ENCODE measurements at regions of chr5 and their contacts with region 1.

Region 1: DNA sequence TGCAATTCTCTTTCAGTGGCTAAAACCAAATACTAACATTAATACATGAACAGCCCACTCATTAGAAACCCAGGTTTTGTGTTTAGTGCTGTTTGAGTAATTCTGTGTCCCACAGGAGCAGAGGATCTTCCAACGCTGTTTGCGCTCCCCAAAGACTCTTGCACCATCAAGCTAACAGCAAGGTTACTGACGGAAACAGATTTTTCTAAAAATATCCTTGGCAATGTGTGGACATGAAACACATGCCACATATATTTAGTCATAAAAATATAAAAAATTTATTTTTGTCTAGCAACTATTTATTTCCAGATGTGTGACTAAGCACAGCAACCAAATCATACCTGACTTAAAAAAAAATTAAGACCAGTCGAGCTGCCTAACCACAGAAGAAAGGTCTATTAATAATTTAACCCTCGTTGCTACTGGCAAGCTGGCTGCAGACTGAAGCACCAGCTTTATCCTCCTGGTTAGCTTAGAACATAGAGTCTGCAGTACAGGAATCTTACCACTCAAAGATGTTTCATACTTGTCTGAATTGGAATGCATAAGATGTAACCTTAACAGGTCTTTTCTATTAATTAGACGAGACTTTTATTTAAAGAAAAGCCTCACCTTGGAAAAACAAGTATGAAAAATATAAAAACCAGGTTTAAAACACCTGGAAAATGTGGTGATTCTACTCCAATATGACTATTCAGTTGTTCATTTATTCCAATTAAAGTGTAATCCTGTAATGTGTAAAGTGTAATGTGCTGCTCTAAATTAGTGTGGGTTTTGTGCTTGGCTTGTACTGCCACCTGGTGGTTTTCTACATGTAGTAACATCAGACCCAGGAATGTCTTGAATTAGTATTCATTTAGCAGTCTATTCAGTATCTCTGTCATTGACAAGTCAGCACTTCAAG is 272.5 kb downstream of the EPB41L4A start:
- DNase-seq: peak; percentile 43 to 78 (median 58)
- ATAC-seq: peak; percentile 98
- H3K4me3 ChIP-seq: no peak overlapping the region
- H3K27ac ChIP-seq: no peak overlapping the region
- H3K4me1 ChIP-seq: no peaks in the 10 kb centered on the region; a peak in 1 of 5 replicates
- H3K27me3 ChIP-seq: no peaks in the 10 kb centered on the region
- CTCF ChIP-seq: peak; percentile 61 to 85 (median 72); a peak in 5 of 6 replicates
- EP300 ChIP-seq: no peak
- POLR2A ChIP-seq: no peak
- RAD21 ChIP-seq: peak; percentile 91 to 94

Region 2: DNA sequence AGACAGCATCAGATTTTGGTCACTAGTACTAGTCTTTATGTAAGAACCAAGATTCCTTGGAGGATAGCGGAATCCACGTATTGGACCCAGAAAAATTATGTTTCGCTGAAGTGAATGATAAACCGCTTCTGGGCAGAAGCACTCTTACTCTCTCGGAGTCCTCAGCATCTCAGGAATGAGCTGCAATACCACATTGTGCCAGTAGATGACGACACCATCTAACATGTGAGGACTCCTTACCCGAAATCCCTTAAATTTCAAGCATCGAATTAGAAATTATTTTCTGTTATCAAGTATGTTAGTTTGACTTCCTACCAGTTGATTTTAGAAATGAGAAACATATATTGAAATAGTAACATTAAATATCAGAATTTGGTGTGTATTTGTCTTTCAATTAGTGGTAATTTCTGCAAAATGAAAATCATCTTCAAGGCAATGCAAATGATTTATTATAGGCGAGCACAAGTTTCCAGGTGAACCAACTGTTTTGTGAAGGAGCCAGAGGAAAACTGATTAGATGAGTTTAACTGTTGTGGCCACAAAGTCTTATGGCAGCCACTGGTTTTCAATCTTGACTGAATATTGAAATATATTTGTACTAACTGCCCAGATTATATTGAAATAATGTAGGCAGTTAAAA is 988.4 kb before region 1 on chr5:
- CTCF ChIA-PET with region 1: interaction called, 23 read pairs
- POLR2A ChIA-PET with region 1: no interaction called
- in situ Hi-C with region 1: loop called (anchors 10 kb)
- intact Hi-C with region 1: loop called (anchors 2 kb)
- DNase-seq: peak; percentile 42 to 77 (median 71)
- ATAC-seq: peak; percentile 88
- H3K4me3 ChIP-seq: no peak overlapping the region
- H3K27ac ChIP-seq: no peak overlapping the region
- H3K4me1 ChIP-seq: no peaks in the 10 kb centered on the region
- H3K27me3 ChIP-seq: no peaks in the 10 kb centered on the region; a peak in 1 of 5 replicates
- CTCF ChIP-seq: peak; percentile 80 to 96 (median 92)
- EP300 ChIP-seq: no peak
- POLR2A ChIP-seq: no peak
- RAD21 ChIP-seq: peak; percentile 89 to 90

Region 3: GRCh38 chr5:111278845-111279504 is 867.6 kb before region 1 on chr5:
- CTCF ChIA-PET with region 1: no interaction called
- POLR2A ChIA-PET with region 1: no interaction called
- in situ Hi-C with region 1: no loop called
- intact Hi-C with region 1: loop called (anchors 5 kb)
- DNase-seq: peak; percentile 70 to 74 (median 72)
- ATAC-seq: peak; percentile 99
- H3K4me3 ChIP-seq: no peak overlapping the region
- H3K27ac ChIP-seq: no peak overlapping the region
- H3K4me1 ChIP-seq: no peaks in the 10 kb centered on the region
- H3K27me3 ChIP-seq: no peaks in the 10 kb centered on the region
- CTCF ChIP-seq: peak; percentile 75 to 81 (median 76)
- EP300 ChIP-seq: no peak
- POLR2A ChIP-seq: no peak
- RAD21 ChIP-seq: peak; percentile 67 to 79

Region 4: DNA sequence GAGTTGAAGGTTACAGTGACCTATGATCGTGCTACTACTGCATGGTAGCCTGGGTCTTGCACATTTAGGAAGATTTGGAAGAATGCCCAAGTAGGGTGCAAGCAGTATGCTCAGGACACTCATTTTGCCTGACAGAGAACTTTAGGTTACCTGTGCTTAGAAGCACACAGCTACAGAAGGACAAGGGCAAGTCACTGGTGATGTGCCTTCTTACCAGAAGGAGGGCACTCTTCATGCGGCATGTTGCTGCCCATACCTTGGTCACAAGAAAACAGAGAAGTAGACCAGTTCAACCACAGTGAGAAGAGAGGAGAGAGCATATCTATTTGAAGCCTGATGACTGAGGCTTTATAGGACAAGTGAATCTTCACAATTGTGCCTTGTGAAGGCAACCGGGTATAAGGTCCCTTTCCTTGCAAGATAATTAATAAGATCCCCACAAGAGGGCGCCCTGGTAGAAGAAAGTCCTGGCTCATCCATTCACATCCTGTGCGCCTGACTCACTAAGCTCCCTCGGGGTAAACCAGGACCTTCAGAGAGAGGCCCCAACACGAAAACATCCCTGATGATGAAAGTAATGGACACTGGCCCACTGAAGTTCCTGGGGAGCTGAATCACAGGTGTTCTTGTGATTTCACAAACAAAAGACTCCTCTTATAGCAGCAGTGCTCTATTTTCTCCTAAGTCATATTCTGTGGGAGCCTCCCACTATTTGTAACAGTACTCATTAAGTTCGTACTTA is 596.1 kb before region 1 on chr5:
- CTCF ChIA-PET with region 1: interaction called, 7 read pairs
- POLR2A ChIA-PET with region 1: no interaction called
- in situ Hi-C with region 1: loop called (anchors 10 kb)
- intact Hi-C with region 1: loop called (anchors 1 kb)
- DNase-seq: peak; percentile 59 to 82 (median 67)
- ATAC-seq: peak; percentile 96
- H3K4me3 ChIP-seq: no peak overlapping the region
- H3K27ac ChIP-seq: no peak overlapping the region
- H3K4me1 ChIP-seq: peaks cover 0 to 3% of the 10 kb centered on the region in 2 experiments; a peak in 1 of 5 replicates
- H3K27me3 ChIP-seq: peaks cover 3% of the 10 kb centered on the region in 2 experiments; a peak in 3 of 5 replicates
- CTCF ChIP-seq: peak; percentile 63 to 70 (median 69)
- EP300 ChIP-seq: no peak
- POLR2A ChIP-seq: no peak
- RAD21 ChIP-seq: peak; percentile 59 to 72

Region 5: GRCh38 chr5:111680737-111681413 is 465.7 kb before region 1 on chr5:
- CTCF ChIA-PET with region 1: interaction called, 5 read pairs
- POLR2A ChIA-PET with region 1: no interaction called
- in situ Hi-C with region 1: no loop called
- intact Hi-C with region 1: loop called (anchors 10 kb)
- DNase-seq: no peak
- ATAC-seq: no peak
- H3K4me3 ChIP-seq: no peak overlapping the region
- H3K27ac ChIP-seq: no peak overlapping the region
- H3K4me1 ChIP-seq: no peaks in the 10 kb centered on the region
- H3K27me3 ChIP-seq: peaks cover 0 to 4% of the 10 kb centered on the region in 2 experiments; a peak in 2 of 5 replicates
- CTCF ChIP-seq: no peak
- EP300 ChIP-seq: no peak
- POLR2A ChIP-seq: no peak
- RAD21 ChIP-seq: no peak

Region 6: DNA sequence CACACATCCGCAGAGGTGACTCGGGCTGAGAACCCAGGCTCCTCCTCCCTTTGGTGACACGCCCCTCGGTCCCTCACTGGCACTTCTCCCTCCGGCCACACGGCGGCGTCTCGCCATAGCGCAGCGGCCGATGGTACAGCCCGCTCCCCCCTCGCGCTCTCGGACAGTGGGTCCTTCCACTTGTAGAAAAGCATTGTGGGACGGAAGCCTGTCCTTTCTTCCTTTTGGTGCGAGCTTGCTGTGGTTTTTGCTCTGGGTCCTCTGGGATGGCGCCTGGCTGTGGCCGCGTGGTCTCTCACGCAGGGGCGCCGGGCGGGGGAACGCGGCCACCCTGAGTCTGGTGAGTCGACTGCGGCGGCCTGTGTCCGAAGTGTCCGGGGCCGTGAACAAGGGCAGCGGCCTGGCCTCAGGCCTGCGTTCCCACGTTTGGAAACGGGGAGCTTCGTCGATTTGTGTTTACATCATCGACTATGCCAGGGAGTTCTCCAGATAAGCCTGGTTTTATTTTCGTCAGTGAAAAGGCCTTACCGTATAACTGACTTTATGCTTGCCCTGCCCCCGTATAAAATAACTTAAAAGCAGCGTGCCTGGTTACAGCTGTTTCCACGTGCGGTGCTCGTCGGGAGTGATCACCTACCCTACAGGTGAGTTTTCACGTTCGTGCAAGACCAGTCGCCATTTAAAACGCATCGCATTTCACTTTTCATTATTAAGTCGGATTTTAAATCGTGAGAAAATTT is 14.2 kb after region 1 on chr5:
- CTCF ChIA-PET with region 1: no interaction called
- POLR2A ChIA-PET with region 1: interaction called, 10 read pairs
- in situ Hi-C with region 1: no loop called
- intact Hi-C with region 1: no loop called
- DNase-seq: peak; percentile 89 to 93 (median 90)
- ATAC-seq: peak; percentile 96
- H3K4me3 ChIP-seq: peak overlapping the region; percentile 74
- H3K27ac ChIP-seq: peak overlapping the region; percentile 83
- H3K4me1 ChIP-seq: peaks cover 0 to 9% of the 10 kb centered on the region in 2 experiments; a peak in 2 of 5 replicates
- H3K27me3 ChIP-seq: no peaks in the 10 kb centered on the region
- CTCF ChIP-seq: peak; percentile 96 to 99 (median 99)
- EP300 ChIP-seq: peak; percentile 21; the same call in 1 of the 2 replicates
- POLR2A ChIP-seq: peak; percentile 99
- RAD21 ChIP-seq: peak; percentile 69 to 71

Region 7: GRCh38 chr5:112492291-112492690 is 345.7 kb after region 1 on chr5:
- CTCF ChIA-PET with region 1: no interaction called
- POLR2A ChIA-PET with region 1: no interaction called
- in situ Hi-C with region 1: no loop called
- intact Hi-C with region 1: no loop called
- DNase-seq: peak; percentile 35 to 67 (median 48)
- ATAC-seq: peak; percentile 99
- H3K4me3 ChIP-seq: no peak overlapping the region
- H3K27ac ChIP-seq: no peak overlapping the region
- H3K4me1 ChIP-seq: no peaks in the 10 kb centered on the region
- H3K27me3 ChIP-seq: no peaks in the 10 kb centered on the region; a peak in 1 of 5 replicates
- CTCF ChIP-seq: peak; percentile 80 to 97 (median 86)
- EP300 ChIP-seq: no peak
- POLR2A ChIP-seq: no peak
- RAD21 ChIP-seq: peak; percentile 35 to 59; a peak in 3 of 4 replicates